Heart right ventricle (tissue), 16 donors: ENCODE measurements at regions of chr9 and their contacts with region 1.

Region 1: DNA sequence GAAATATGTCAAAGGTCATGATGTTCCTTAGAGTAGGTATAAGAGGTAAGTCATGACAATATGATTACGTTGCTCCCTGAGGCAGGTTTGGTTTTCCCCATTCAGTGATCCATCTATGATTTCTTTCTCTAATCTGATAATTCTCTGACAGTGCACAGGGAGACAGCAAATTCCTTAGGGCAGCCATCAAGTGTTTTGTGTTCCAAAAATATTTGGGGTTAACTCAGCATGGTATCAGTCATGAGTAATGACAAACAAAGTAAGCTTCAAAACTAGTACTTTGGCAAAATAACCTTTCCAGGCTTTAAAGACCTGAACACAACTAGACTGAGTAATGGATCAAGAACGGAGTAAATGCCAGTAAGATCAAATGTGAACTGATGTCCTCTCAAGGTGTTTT is 55.3 kb upstream of the SPATA31E1 start:
- DNase-seq: no peak
- ATAC-seq: no peak
- H3K4me3 ChIP-seq: no peak overlapping the region
- H3K27ac ChIP-seq: no peak overlapping the region
- H3K4me1 ChIP-seq: no peaks in the 10 kb centered on the region
- H3K27me3 ChIP-seq: peaks cover 0 to 30% (median 8%) of the 10 kb centered on the region in 7 donors
- CTCF ChIP-seq: no peak

Region 2: DNA sequence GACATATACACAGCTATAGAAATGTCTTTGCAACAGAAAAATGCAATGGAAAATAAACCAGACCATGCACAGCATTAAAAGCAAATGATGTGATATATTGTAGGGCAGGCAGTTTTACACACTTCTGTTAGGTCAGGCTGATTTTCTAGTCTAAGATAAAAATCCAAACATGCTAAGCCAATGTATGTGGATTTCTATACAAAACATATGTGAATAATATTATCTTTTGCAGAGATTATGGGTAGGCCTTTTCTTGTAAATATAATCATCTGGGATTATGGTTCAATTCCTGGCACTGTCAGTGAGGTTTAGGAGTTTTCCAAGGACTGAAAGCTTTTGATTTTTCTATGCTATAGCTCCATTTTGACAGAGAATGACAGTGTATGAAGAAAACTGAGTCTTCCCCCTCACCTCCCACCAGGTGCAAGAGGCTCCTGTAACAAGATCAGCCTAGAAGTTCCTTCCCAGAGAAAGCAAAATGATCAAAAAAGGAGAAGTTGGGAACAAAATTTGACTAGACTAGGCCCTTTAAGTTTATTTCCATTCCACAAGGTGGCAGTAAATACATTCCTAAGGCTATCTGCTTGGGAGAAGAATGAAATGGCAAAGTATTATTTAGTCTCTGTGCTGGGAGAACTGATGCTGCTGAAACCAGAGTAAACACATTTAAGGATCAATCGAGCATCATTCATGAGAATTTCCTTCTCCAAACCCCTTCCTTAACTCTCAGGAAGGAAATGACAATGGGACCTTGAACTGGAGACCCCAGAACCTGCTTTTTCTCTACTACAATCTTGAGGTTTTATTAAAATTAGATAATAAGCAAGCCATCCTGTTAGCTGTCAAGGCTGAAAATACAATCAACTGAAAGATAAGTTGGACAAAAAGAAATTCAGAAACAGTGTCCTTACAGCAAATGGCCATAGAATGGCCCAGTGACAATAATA is 1340.2 kb before region 1 on chr9:
- intact Hi-C with region 1: no loop called
- DNase-seq: no peak
- ATAC-seq: peak in 7 of 8 donors; percentile 55 to 80 (median 73)
- H3K4me3 ChIP-seq: no peak overlapping the region
- H3K27ac ChIP-seq: no peak overlapping the region
- H3K4me1 ChIP-seq: peaks cover 0 to 6% (median 0%) of the 10 kb centered on the region in 9 donors
- H3K27me3 ChIP-seq: peaks cover 0 to 4% (median 0%) of the 10 kb centered on the region in 7 donors
- CTCF ChIP-seq: peak; percentile 44 to 79 (median 69)

Region 3: GRCh38 chr9:87342743-87343142 is 484.6 kb before region 1 on chr9:
- intact Hi-C with region 1: loop called in 1 of 10 experiments (anchors 10 kb)
- DNase-seq: peak; percentile 23 to 30
- ATAC-seq: peak; percentile 28 to 81 (median 61)
- H3K4me3 ChIP-seq: no peak overlapping the region
- H3K27ac ChIP-seq: no peak overlapping the region
- H3K4me1 ChIP-seq: peaks cover 0 to 3% (median 1%) of the 10 kb centered on the region in 9 donors
- H3K27me3 ChIP-seq: peaks cover 0 to 21% (median 14%) of the 10 kb centered on the region in 7 donors
- CTCF ChIP-seq: no peak

Region 4: GRCh38 chr9:87878989-87879511 is 51.7 kb after region 1 on chr9:
- intact Hi-C with region 1: no loop called
- DNase-seq: no peak
- ATAC-seq: no peak
- H3K4me3 ChIP-seq: no peak overlapping the region
- H3K27ac ChIP-seq: no peak overlapping the region
- H3K4me1 ChIP-seq: no peaks in the 10 kb centered on the region
- H3K27me3 ChIP-seq: peaks cover 0 to 8% (median 2%) of the 10 kb centered on the region in 7 donors
- CTCF ChIP-seq: no peak